ENCODE measurements at regions of chrX and their contacts with region 1.

Region 1: DNA sequence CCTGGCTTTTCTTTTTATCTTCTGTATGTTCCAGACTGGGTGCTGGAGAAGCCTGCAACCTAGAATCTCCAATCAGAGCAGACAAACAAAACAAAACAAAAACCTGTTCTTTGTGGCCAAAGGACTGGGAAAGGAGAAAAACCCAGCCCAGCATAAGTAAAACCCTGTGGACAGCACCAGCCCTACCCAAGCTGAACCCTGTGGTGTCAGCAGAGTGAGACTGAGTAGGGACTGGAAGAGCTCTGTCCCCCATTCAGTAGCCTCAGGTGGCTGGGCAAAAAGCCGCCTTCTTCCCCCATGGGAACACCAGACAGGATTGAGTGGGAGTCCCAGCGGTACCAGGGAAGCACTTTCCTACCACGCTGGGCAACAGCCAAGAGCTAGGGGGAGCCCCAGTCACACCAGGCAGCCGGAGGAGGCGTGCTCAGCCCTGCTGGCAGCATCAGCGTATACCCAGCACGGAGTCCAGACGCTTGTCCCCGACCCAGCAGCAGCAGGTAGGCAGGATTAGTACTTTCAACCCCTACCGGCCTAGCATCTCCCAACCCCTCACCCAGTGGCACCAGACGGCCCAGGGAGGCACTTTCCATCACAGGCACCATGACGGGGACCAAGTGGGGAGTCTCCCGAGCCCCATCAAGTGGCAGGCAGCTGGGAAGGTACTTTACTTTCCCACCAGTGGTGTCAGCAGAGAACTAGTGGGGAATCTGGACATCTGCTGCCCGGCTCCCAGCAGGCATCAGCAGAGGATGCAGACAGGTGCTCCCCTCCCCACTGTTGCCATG is 8.6 kb upstream of the JADE3 start:
- DNase-seq: peak; percentile 80 to 92 (median 88)
- ATAC-seq: peak; percentile 99
- H3K4me3 ChIP-seq: peak overlapping the region; percentile 15
- H3K27ac ChIP-seq: no peak overlapping the region
- H3K4me1 ChIP-seq: peaks cover 2% of the 10 kb centered on the region
- H3K27me3 ChIP-seq: no peaks in the 10 kb centered on the region

Region 2: GRCh38 chrX:46978341-46979291 is 75.0 kb after region 1 on chrX:
- intact Hi-C with region 1: loop called in 2 of 4 experiments (anchors 5 to 10 kb)
- DNase-seq: peak; percentile 74 to 87 (median 76)
- ATAC-seq: peak; percentile 51 to 74
- H3K4me3 ChIP-seq: no peak overlapping the region
- H3K27ac ChIP-seq: no peak overlapping the region
- H3K4me1 ChIP-seq: no peaks in the 10 kb centered on the region
- H3K27me3 ChIP-seq: no peaks in the 10 kb centered on the region

Region 3: DNA sequence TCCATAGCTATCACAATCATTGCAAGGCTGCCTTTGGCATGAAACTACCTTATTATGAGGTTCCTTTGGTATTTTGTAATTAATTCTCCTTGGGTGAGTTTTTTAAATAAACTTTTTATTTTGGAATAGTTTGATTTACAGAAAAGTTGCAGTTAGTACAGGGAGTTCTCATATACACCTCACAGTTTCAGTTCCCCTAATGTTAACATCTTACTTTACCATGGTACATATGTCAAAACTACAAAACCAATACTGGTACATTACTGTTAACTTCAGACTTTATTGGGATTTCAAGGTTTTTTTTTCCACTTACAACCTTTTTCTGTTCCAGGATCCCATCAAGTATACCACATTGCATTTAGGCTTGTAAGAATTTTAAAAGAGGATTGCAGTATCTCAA is 122.5 kb after region 1 on chrX:
- intact Hi-C with region 1: loop called in 1 of 4 experiments (anchors 10 kb)
- DNase-seq: no peak
- ATAC-seq: no peak
- H3K4me3 ChIP-seq: no peak overlapping the region
- H3K27ac ChIP-seq: no peak overlapping the region
- H3K4me1 ChIP-seq: no peaks in the 10 kb centered on the region
- H3K27me3 ChIP-seq: no peaks in the 10 kb centered on the region